HepG2 (cell line): ENCODE measurements at regions of chr2 and their contacts with region 1.

Region 1: GRCh38 chr2:109690822-109691547 is 76.8 kb downstream of the SOWAHC start:
- DNase-seq: peak; percentile 96
- ATAC-seq: peak; percentile 95
- H3K4me3 ChIP-seq: peak overlapping the region; percentile 1 to 40 (median 3); a peak in 4 of 6 replicates
- H3K27ac ChIP-seq: peak overlapping the region; percentile 89
- H3K4me1 ChIP-seq: peaks cover 81% of the 10 kb centered on the region
- H3K27me3 ChIP-seq: no peaks in the 10 kb centered on the region
- CTCF ChIP-seq: no peak
- EP300 ChIP-seq: peak in 1 of 2 experiments; percentile 86; a peak in 2 of 4 replicates
- POLR2A ChIP-seq: peak; percentile 68 to 70; a peak in 3 of 4 replicates
- RAD21 ChIP-seq: peak; percentile 7; the same call in 1 of the 2 replicates

Region 2: GRCh38 chr2:109632158-109632789 is 58.7 kb before region 1 on chr2:
- CTCF ChIA-PET with region 1: no interaction called
- POLR2A ChIA-PET with region 1: interaction called, 4 read pairs
- in situ Hi-C with region 1: no loop called
- intact Hi-C with region 1: loop called (anchors 2 kb)
- DNase-seq: peak; percentile 86
- ATAC-seq: peak; percentile 55
- H3K4me3 ChIP-seq: peak overlapping the region in 1 of 3 experiments; percentile 24; a peak in 2 of 6 replicates
- H3K27ac ChIP-seq: peak overlapping the region; percentile 68
- H3K4me1 ChIP-seq: peaks cover 74% of the 10 kb centered on the region
- H3K27me3 ChIP-seq: no peaks in the 10 kb centered on the region
- CTCF ChIP-seq: no peak; the same call in 1 of the 2 replicates
- EP300 ChIP-seq: peak; percentile 18 to 65; a peak in 1 of 4 replicates
- POLR2A ChIP-seq: no peak
- RAD21 ChIP-seq: no peak

Region 3: DNA sequence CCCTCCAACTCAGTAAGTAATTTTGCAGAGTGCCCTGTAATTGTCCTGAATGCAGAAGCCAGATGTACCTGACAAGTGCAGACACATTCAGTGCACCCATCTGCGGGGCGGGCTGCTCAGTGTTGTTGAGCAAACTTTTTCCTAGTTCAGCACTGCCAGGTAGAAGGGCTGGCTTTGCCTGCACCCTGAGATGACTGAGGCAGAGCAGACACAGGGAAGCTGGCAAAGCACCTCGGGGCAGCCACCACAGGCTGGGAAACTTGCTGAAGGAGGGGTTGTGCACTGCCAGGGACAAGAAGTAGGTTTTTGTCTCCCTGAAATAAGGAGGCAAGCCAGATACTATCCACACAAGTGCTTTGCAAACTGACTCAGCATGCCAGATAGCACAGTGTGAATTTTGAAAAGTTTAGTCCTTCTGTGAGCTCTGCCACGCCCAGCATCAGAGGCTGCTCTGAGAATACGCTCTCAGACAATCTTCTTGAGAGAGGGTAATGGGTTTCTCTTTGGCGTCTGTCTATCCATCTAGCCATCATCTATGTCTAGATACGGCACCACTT is 14.6 kb before region 1 on chr2:
- CTCF ChIA-PET with region 1: no interaction called
- POLR2A ChIA-PET with region 1: interaction called, 125 read pairs
- in situ Hi-C with region 1: no loop called
- intact Hi-C with region 1: loop called (anchors 2 kb)
- DNase-seq: no peak
- ATAC-seq: peak; percentile 21
- H3K4me3 ChIP-seq: peak overlapping the region in 2 of 3 experiments; percentile 9 to 50; a peak in 2 of 6 replicates
- H3K27ac ChIP-seq: peak overlapping the region; percentile 70
- H3K4me1 ChIP-seq: peaks cover 81% of the 10 kb centered on the region
- H3K27me3 ChIP-seq: no peaks in the 10 kb centered on the region
- CTCF ChIP-seq: no peak
- EP300 ChIP-seq: no peak
- POLR2A ChIP-seq: peak in 1 of 2 experiments; percentile 12; a peak in 1 of 4 replicates
- RAD21 ChIP-seq: no peak

Region 4: GRCh38 chr2:110903548-110903947 is 1212.6 kb after region 1 on chr2:
- CTCF ChIA-PET with region 1: no interaction called
- POLR2A ChIA-PET with region 1: no interaction called
- in situ Hi-C with region 1: no loop called
- intact Hi-C with region 1: no loop called
- DNase-seq: no peak
- ATAC-seq: no peak
- H3K4me3 ChIP-seq: no peak overlapping the region
- H3K27ac ChIP-seq: no peak overlapping the region
- H3K4me1 ChIP-seq: no peaks in the 10 kb centered on the region
- H3K27me3 ChIP-seq: peaks cover 0 to 8% of the 10 kb centered on the region in 2 experiments; a peak in 2 of 5 replicates
- CTCF ChIP-seq: no peak
- EP300 ChIP-seq: no peak
- POLR2A ChIP-seq: no peak
- RAD21 ChIP-seq: no peak